ENCODE measurements at regions of chr3 and their contacts with region 1.

Region 1: GRCh38 chr3:26365706-26366105 is 256.9 kb upstream of the LRRC3B start:
- DNase-seq: no peak
- ATAC-seq: no peak
- H3K4me3 ChIP-seq: no peak overlapping the region
- H3K27ac ChIP-seq: no peak overlapping the region
- H3K4me1 ChIP-seq: no peaks in the 10 kb centered on the region
- H3K27me3 ChIP-seq: no peaks in the 10 kb centered on the region
- CTCF ChIP-seq: no peak
- POLR2A ChIP-seq: no peak

Region 2: GRCh38 chr3:26418553-26418952 is 52.8 kb after region 1 on chr3:
- intact Hi-C with region 1: loop called in 1 of 10 experiments (anchors 2 kb)
- DNase-seq: no peak
- ATAC-seq: no peak
- H3K4me3 ChIP-seq: no peak overlapping the region
- H3K27ac ChIP-seq: no peak overlapping the region
- H3K4me1 ChIP-seq: peaks cover 0 to 6% (median 0%) of the 10 kb centered on the region in 12 donors
- H3K27me3 ChIP-seq: no peaks in the 10 kb centered on the region
- CTCF ChIP-seq: no peak
- POLR2A ChIP-seq: no peak

Measured in heart left ventricle (tissue), 16 donors.